ENCODE measurements at regions of chr14 and their contacts with region 1.

Region 1: DNA sequence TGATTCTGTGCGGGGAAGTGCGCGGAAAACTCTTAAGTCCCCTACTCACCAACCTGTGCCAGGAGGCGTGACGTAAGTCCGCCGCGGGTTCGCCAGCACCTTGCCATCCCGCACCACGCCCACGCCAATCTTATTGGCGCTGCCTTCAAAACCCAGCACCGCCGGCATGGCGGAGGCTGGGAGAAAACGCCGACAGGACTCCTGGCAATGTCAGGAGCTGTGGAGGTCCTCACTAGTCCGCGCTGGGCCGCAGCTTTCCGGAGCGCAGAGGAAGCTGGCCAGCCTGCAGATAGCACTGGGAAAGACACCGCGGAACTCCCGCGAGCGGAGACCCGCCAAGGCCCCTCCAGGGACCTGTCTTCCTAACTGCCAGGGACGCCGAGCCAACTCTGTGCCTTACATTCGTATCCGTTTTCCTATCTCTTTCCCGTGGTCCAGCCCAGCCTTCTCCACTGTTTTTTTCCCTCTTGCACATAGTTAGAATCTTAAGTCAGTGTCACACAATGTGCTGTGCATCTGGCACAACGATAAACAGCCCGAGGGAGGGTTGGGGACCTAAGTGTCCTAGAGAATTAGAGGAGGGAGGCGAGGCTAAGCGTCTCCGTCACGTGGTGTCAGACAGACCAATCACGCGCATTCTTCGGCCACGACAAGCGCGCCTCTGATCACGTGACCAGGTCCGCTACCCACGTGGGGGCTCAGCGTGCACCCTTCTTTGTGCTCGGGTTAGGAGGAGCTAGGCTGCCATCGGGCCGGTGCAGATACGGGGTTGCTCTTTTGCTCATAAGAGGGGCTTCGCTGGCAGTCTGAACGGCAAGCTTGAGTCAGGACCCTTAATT is at the starts of genes APEX1 and OSGEP:
- DNase-seq: peak; percentile 97
- H3K4me3 Mint-ChIP-seq: peak within 1 kb of the TSS; percentile 53
- H3K27ac Mint-ChIP-seq: no peak within 1 kb of the TSS
- H3K4me1 Mint-ChIP-seq: peaks cover 11% of the 10 kb centered on the region
- H3K27me3 Mint-ChIP-seq: no peaks in the 10 kb centered on the region
- total RNA-seq, gene APEX1: 236 and 242 TPM in 2 replicates
- total RNA-seq, gene OSGEP: 69.6 and 77.4 TPM in 2 replicates

Region 2: GRCh38 chr14:20327005-20327869 is 127.5 kb before region 1 on chr14:
- intact Hi-C with region 1: loop called (anchors 1 kb)
- DNase-seq: peak; percentile 22
- H3K4me3 Mint-ChIP-seq: peak overlapping the region; percentile 9
- H3K27ac Mint-ChIP-seq: peak overlapping the region; percentile 13
- H3K4me1 Mint-ChIP-seq: peaks cover 52% of the 10 kb centered on the region
- H3K27me3 Mint-ChIP-seq: no peaks in the 10 kb centered on the region

Region 3: DNA sequence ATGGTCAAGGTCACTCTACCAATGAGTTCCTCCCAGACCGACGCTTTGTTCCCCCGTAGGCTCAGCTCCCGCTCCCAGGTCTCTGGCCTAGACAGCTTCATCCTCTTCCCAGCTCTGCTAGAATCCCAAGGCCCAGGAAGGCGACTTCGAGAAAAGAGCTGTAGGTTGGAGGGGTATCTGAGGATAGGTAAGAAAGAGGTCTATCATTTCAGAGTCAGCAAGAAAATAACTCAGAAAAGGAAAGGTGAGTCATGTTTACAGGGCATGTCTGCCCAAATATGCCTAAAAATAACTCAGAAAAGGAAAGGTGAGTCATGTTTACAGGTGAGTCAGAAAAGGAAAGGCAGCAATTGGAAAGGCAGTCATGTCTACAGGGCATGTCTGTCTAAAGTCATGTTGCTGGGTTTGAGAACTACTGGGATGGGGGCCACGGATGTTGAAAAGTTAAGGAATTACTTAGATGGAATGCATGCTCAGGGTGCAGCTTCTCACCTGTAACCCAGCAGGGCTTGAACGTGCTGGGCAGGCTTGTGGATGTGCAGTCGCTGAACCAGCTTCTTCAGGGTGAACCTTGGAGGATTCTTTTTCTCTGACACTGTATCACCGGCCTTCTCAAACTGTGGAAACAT is 53.7 kb before region 1 on chr14:
- intact Hi-C with region 1: loop called (anchors 2 kb)
- DNase-seq: no peak
- H3K4me3 Mint-ChIP-seq: peak overlapping the region; percentile 53
- H3K27ac Mint-ChIP-seq: peak overlapping the region; percentile 86
- H3K4me1 Mint-ChIP-seq: peaks cover 30% of the 10 kb centered on the region
- H3K27me3 Mint-ChIP-seq: no peaks in the 10 kb centered on the region

Region 4: DNA sequence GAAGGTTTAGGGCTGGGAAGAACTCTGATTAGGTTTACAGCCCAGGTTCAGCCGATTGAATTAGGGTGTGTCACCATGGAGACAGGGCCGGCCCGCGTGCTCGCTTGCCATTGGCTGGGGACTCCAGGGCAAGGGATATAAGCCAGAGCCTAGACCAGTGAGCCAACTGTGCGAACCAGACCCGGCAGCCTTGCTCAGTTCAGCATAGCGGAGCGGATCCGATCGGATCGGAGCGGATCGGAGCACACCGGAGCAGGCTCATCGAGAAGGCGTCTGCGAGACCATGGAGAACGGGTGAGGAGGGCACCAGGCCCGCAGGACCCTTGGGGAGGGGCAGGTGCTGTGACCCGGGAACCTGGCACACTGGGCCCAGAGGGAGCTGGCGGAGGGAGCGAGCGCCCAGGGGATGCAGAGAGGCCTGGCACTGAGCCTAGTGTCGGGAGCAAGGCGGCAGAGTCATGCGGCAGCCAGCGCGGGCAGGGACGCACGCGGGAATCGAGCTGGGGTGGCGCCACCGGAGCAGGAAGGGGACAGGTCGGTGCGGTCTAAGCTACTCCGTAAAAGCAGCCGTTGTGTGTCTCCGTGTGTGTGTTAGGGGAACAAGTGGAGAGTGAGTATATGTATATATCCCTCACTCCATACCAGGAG is 14.6 kb after region 1 on chr14 and contains the start of gene PNP:
- intact Hi-C with region 1: loop called (anchors 2 kb)
- DNase-seq: peak; percentile 85
- H3K4me3 Mint-ChIP-seq: peak within 1 kb of the TSS; percentile 95
- H3K27ac Mint-ChIP-seq: peak within 1 kb of the TSS; percentile 96
- H3K4me1 Mint-ChIP-seq: peaks cover 40% of the 10 kb centered on the region
- H3K27me3 Mint-ChIP-seq: peaks cover 3% of the 10 kb centered on the region
- total RNA-seq, gene PNP: 149 TPM in 2 replicates